Activated CD8-positive, alpha-beta T cell treated with anti-CD3 and anti-CD28 coated beads for 36 hours (primary cell): ENCODE measurements at regions of chr2 and their contacts with region 1.

Region 1: DNA sequence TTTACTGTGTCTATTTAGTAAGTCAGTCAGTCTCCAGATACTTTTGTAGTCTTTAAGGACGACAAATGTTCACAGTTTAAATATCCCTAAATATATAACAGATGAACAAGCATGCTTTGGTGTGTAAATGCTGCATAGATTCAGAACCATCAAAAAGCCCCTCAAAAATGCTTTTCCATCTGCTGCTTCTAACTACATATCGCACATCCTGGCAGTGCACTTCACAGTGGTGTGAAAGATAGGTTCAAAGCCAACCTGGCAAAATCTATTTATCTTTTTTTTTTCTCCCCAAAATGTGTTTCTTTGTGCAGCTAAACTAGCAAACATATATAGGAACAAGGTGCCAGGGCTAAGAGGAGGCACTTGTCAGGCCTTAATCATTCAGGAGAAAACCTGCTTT is 753.8 kb downstream of the PLCL1 start:
- DNase-seq: no peak
- ATAC-seq: no peak
- H3K4me3 Mint-ChIP-seq: no peak overlapping the region
- H3K27ac Mint-ChIP-seq: no peak overlapping the region
- H3K4me1 Mint-ChIP-seq: no peaks in the 10 kb centered on the region
- H3K27me3 Mint-ChIP-seq: no peaks in the 10 kb centered on the region
- CTCF ChIP-seq: no peak

Region 2: GRCh38 chr2:198309673-198310280 is 248.4 kb before region 1 on chr2:
- CTCF ChIA-PET with region 1: no interaction called
- POLR2A ChIA-PET with region 1: no interaction called
- intact Hi-C with region 1: loop called (anchors 10 kb)
- DNase-seq: peak; percentile 71
- ATAC-seq: no peak
- H3K4me3 Mint-ChIP-seq: no peak overlapping the region
- H3K27ac Mint-ChIP-seq: no peak overlapping the region
- H3K4me1 Mint-ChIP-seq: no peaks in the 10 kb centered on the region
- H3K27me3 Mint-ChIP-seq: peaks cover 22% of the 10 kb centered on the region
- CTCF ChIP-seq: peak; percentile 71

Region 3: DNA sequence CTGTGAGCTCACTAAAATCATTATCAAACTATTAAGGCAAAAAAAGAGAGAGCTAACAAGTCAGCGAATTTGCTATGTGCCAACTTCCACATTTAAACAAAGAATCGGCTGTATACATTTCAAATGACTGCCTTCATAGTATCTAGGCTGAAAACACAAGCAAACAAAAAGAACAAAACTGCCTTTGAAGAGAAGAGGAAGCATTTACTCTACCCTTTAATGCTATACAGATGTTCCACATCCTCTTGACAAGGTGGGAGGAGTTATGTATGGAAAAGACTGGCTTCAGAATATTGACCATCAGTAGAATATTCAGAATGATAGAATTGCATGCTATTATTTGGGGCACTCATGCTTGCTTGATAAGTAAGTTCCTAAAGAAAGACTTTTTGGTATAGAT is 12.1 kb before region 1 on chr2:
- CTCF ChIA-PET with region 1: no interaction called
- POLR2A ChIA-PET with region 1: no interaction called
- intact Hi-C with region 1: no loop called
- DNase-seq: no peak
- ATAC-seq: no peak
- H3K4me3 Mint-ChIP-seq: no peak overlapping the region
- H3K27ac Mint-ChIP-seq: no peak overlapping the region
- H3K4me1 Mint-ChIP-seq: no peaks in the 10 kb centered on the region
- H3K27me3 Mint-ChIP-seq: no peaks in the 10 kb centered on the region
- CTCF ChIP-seq: no peak